ENCODE measurements at regions of chr11 and their contacts with region 1.

Region 1: GRCh38 chr11:125923012-125923579 is 18.8 kb downstream of the DDX25 start:
- DNase-seq: peak; percentile 18 to 38 (median 30)
- H3K4me3 ChIP-seq: no peak overlapping the region
- H3K4me3 Mint-ChIP-seq: no peak overlapping the region
- H3K27ac ChIP-seq: no peak overlapping the region
- H3K27ac Mint-ChIP-seq: no peak overlapping the region
- H3K4me1 ChIP-seq: no peaks in the 10 kb centered on the region
- H3K4me1 Mint-ChIP-seq: peaks cover 2% of the 10 kb centered on the region
- H3K27me3 ChIP-seq: no peaks in the 10 kb centered on the region
- H3K27me3 Mint-ChIP-seq: peaks cover 3 to 4% (median 3%) of the 10 kb centered on the region in 3 donors
- CTCF ChIP-seq: peak; percentile 65

Region 2: DNA sequence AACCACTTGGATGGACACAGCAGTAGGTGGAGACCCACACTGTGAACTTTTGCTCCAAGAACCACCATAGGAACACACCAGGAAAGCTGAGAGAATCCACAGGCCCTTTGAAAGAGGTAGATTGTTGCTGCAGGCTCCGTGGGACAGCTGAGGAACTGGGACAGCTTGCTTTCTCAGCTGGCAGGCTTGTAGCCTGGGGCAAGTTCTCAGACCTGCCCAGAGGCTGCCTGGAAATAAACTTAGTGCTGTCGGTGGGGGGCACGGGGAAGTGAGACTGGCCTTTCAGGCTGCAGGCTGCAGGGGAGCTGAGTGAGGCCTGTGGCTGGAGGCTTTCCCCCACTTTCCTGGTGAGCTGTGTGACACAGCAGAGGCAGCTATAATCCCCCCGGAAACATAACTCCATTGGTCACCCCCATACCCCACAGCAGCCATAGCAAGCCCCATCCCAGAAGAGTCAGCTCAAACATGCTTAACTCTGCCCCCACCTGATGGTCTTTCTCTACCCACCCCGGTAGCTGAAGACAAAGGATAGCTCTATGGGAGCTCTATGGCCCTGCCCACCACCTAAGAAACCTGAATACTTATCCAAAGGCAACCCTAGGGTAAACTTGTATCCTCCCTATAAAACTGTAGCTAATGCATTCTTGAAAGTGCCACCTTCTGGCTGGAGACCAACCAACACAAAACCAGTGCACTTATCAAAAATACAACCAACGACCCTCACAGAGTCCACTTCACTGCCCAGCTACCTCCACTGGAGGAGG is 221.1 kb before region 1 on chr11:
- intact Hi-C with region 1: no loop called
- DNase-seq: no peak
- H3K4me3 ChIP-seq: no peak overlapping the region
- H3K4me3 Mint-ChIP-seq: no peak overlapping the region
- H3K27ac ChIP-seq: no peak overlapping the region
- H3K27ac Mint-ChIP-seq: no peak overlapping the region
- H3K4me1 ChIP-seq: no peaks in the 10 kb centered on the region
- H3K4me1 Mint-ChIP-seq: no peaks in the 10 kb centered on the region
- H3K27me3 ChIP-seq: no peaks in the 10 kb centered on the region
- H3K27me3 Mint-ChIP-seq: peaks cover 4 to 12% (median 7%) of the 10 kb centered on the region in 3 donors
- CTCF ChIP-seq: no peak

Region 3: DNA sequence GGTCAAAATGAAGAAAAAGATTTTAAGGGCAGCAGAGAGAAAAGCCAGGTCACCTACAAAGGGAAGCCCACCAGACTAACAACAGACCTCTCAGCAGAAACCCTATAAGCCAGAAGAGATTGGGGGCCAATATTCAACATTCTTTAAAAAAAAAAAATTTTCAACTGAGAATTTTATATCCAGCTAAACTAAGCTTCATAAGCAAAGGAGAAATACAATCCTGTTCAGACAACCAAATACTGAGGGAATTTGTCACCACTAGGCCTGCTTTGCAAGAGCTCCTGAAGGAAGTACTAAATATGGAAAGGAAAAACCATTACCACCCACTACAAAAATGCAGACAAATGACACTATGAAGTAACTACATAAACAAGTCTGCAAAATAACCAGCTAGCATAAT is 76.9 kb before region 1 on chr11:
- intact Hi-C with region 1: no loop called
- DNase-seq: no peak
- H3K4me3 ChIP-seq: no peak overlapping the region
- H3K4me3 Mint-ChIP-seq: no peak overlapping the region
- H3K27ac ChIP-seq: no peak overlapping the region
- H3K27ac Mint-ChIP-seq: no peak overlapping the region
- H3K4me1 ChIP-seq: no peaks in the 10 kb centered on the region
- H3K4me1 Mint-ChIP-seq: no peaks in the 10 kb centered on the region
- H3K27me3 ChIP-seq: no peaks in the 10 kb centered on the region
- H3K27me3 Mint-ChIP-seq: peaks cover 2 to 7% (median 6%) of the 10 kb centered on the region in 3 donors
- CTCF ChIP-seq: no peak

Region 4: DNA sequence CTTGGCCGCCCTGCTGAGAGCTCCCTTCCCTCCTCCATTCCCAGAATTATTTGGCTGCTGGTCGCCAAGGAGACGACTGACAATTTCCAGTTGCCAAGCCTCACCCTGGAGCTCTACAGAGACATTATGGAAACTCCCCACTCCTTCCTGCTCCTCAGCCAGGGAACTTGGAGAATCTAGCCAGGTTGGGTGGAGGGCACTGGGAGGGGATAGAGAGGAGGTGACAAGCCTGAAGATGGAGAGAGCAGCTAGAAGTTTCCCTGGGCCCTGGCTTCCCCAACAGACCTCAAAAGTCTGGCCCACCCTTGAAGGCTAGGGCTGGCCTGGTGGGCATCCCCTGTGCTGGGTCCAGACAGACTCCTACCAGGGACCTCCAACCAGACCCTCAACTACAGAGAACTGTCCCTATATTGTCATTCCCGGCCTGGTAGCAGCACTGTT is 16.0 kb after region 1 on chr11:
- intact Hi-C with region 1: no loop called
- DNase-seq: no peak
- H3K4me3 ChIP-seq: no peak overlapping the region
- H3K4me3 Mint-ChIP-seq: no peak overlapping the region
- H3K27ac ChIP-seq: no peak overlapping the region
- H3K27ac Mint-ChIP-seq: no peak overlapping the region
- H3K4me1 ChIP-seq: no peaks in the 10 kb centered on the region
- H3K4me1 Mint-ChIP-seq: peaks cover 4% of the 10 kb centered on the region
- H3K27me3 ChIP-seq: no peaks in the 10 kb centered on the region
- H3K27me3 Mint-ChIP-seq: peaks cover 0 to 8% (median 2%) of the 10 kb centered on the region in 3 donors
- CTCF ChIP-seq: no peak

Region 5: GRCh38 chr11:126194121-126194543 is 271.0 kb after region 1 on chr11:
- intact Hi-C with region 1: loop called (anchors 5 kb)
- DNase-seq: peak; percentile 3 to 34 (median 27)
- H3K4me3 ChIP-seq: no peak overlapping the region
- H3K4me3 Mint-ChIP-seq: no peak overlapping the region
- H3K27ac ChIP-seq: no peak overlapping the region
- H3K27ac Mint-ChIP-seq: peak overlapping the region in 1 of 7 donors; percentile 60
- H3K4me1 ChIP-seq: no peaks in the 10 kb centered on the region
- H3K4me1 Mint-ChIP-seq: no peaks in the 10 kb centered on the region
- H3K27me3 ChIP-seq: no peaks in the 10 kb centered on the region
- H3K27me3 Mint-ChIP-seq: peaks cover 0 to 5% (median 1%) of the 10 kb centered on the region in 3 donors
- CTCF ChIP-seq: peak; percentile 63